Heart left ventricle (tissue), 16 donors: ENCODE measurements at regions of chr12 and their contacts with region 1.

Region 1: GRCh38 chr12:43805860-43806736 is at the start of gene TWF1:
- DNase-seq: peak; percentile 90 to 95 (median 92)
- ATAC-seq: peak; percentile 87 to 100 (median 99)
- H3K4me3 ChIP-seq: peak within 1 kb of the TSS; percentile 63 to 99 (median 88)
- H3K27ac ChIP-seq: peak within 1 kb of the TSS; percentile 87 to 98 (median 95)
- H3K4me1 ChIP-seq: peaks cover 0 to 38% (median 23%) of the 10 kb centered on the region in 12 donors
- H3K27me3 ChIP-seq: no peaks in the 10 kb centered on the region
- CTCF ChIP-seq: peak in 7 of 12 donors; percentile 15 to 43 (median 35)
- POLR2A ChIP-seq: peak in 1 of 2 donors; percentile 75
- total RNA-seq, gene TWF1: 9.3 to 34.6 (median 10.7) TPM

Region 2: DNA sequence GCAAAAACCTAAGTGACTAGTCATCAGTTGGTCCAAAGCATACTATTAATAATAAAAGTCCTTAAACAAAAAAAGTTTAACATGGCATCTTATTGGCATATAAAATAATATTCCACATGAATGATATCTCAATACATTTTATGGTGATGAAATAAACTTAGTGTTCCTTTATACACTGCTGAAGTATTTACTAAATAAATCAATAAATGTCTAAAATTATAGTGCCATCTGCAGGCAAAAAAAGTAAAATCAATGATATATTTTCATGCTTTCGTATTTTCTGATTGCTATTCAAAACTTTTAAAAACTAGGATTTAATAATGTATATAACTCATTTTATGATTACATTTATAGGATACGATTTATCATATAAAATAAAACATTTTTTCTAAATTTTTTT is 78.0 kb before region 1 on chr12:
- intact Hi-C with region 1: no loop called
- DNase-seq: no peak
- ATAC-seq: no peak
- H3K4me3 ChIP-seq: no peak overlapping the region
- H3K27ac ChIP-seq: no peak overlapping the region
- H3K4me1 ChIP-seq: no peaks in the 10 kb centered on the region
- H3K27me3 ChIP-seq: no peaks in the 10 kb centered on the region
- CTCF ChIP-seq: peak in 8 of 12 donors; percentile 8 to 37 (median 25)
- POLR2A ChIP-seq: no peak

Region 3: DNA sequence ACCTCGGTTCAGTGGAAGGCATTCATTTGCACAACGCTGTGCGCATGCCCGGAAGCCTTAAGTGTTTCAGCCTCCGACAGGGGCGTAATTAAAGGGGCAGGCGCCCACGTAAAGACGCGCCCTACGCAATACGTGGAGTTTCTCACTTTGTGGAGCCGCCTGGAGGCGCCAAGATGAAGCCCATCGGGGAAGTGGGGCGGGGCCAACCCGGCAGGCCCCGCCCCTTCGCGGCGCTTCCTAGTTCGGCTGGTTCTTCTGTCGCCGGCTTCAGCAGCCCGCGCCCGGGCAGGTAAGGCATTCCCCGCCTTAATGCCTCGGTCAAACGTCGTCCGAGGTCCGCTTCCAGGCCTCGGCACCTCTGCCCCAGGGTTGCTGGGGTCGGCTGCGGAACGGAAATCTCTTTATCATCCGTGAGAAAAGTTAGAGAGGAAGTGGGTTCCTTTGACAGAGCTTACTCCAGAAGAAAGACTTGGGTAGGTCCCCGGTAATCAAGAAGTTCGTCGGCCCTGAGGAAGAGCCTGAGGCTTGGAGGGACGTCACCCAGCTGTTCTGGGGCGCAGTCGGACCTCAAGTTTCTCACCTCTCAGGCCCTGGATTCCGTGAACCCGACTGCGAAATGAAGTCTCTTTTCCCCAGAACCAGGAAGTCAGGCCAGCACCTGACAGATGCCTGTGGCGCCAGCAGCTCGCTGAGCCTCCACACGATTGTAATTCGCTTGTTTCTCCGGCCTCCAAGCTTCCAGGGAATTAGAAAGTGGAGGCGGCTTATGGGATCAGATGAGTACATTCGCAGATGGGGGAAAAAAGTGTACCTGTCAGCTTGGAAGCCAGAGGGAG is 47.2 kb before region 1 on chr12 and contains the starts of genes IRAK4 and PUS7L:
- intact Hi-C with region 1: loop called in 5 of 10 experiments (anchors 1 to 5 kb)
- DNase-seq: peak; percentile 92 to 97 (median 96)
- ATAC-seq: peak; percentile 99 to 100 (median 100)
- H3K4me3 ChIP-seq: peak within 1 kb of the TSS; percentile 45 to 92 (median 78)
- H3K27ac ChIP-seq: peak within 1 kb of the TSS; percentile 41 to 94 (median 81)
- H3K4me1 ChIP-seq: peaks cover 0 to 45% (median 18%) of the 10 kb centered on the region in 12 donors
- H3K27me3 ChIP-seq: no peaks in the 10 kb centered on the region
- CTCF ChIP-seq: peak in 11 of 12 donors; percentile 22 to 76 (median 40)
- POLR2A ChIP-seq: peak in 1 of 2 donors; percentile 65
- total RNA-seq, gene IRAK4: 3.6 to 14.4 (median 5.1) TPM
- total RNA-seq, gene PUS7L: 3.7 to 7.6 (median 5.3) TPM

Region 4: DNA sequence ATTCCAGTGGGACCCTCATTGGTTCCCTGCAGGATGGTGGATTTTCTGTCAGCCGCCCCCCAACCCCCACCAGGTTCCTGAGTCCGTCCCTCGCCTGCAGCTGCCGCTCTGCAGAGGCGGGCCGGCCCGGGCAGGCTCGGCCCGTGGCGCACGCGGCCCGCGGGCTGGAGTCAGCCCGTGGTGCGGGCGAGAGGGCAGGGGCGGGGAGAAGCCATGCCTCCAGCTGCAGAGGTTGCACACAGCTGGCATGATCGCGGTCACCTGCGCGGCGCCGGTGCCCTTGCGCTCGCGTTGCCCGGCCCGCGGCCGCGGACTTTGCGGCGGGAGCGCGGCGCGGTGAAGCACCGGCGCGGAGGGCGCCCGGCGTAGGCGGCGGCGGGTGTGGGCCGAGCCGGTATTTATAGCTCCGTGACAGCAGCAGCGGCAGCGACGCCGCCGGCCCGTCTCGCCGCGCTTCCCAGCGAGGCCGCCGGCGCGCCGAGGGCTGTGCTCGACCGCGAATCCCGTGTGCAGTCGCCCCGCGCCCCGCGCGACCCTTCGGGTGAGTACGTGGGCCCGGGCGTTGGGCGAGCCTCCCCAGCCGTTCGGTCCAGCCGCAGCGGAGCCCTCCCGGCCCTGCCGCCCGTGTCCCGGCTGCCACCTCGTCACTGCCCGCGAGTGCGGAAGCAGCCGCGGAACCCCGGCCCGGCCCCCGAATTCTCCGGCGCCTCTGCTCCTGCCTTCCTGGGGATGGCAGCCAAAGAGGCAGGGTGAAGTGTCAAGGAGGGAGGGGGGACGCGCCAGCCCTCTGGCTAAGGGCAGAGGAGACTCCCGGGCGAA is 29.8 kb after region 1 on chr12 and contains the start of gene TMEM117:
- intact Hi-C with region 1: loop called in 5 of 10 experiments (anchors 1 to 2 kb)
- DNase-seq: peak; percentile 83 to 89 (median 86)
- ATAC-seq: peak; percentile 88 to 95 (median 92)
- H3K4me3 ChIP-seq: peak within 1 kb of the TSS; percentile 44 to 95 (median 76)
- H3K27ac ChIP-seq: peak within 1 kb of the TSS; percentile 88 to 99 (median 96)
- H3K4me1 ChIP-seq: peaks cover 0 to 23% (median 15%) of the 10 kb centered on the region in 12 donors
- H3K27me3 ChIP-seq: no peaks in the 10 kb centered on the region
- CTCF ChIP-seq: no peak
- POLR2A ChIP-seq: peak in 1 of 2 donors; percentile 58
- total RNA-seq, gene TMEM117: 5.7 to 13.5 (median 7.8) TPM